Endothelial cell of umbilical vein (primary cell): ENCODE measurements at regions of chrX and their contacts with region 1.

Region 1: DNA sequence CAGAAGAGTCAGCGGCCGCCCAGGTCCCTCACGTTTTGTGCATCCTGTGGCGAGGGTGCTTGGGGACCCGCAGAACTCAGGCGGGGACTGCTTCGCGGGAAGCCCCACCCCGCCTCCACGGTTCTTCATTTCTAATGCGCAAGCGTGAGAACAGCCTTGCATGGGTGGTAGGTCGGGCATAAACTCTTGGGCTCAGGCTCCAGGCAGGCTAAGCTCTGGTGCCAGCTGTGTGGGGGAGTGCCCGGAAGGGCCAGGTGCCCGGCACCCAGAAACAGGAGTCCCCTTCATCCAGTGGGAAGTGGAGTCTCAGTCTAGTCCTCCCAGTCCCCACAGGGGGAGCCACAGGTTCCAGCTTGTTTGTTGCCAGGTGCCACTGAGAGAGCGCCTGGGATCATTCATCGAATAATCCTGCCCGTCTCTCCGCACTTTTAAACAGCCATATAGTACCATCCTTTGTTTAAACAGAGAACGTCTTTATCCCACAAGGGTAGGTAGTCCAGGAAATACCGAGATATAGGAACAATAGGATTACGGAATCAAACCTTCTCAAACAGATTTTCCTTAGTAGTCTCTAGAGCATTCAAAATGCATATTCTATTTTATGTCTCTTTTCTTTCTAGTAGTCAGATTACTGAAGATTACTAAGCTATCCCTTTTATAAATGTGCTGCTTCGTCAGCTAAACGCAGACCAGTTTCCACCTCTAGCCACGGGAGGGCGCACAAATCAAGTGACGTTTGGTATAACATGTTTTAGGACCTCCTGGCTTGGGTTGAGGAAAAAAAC is 12.7 kb upstream of the RBBP7 start:
- DNase-seq: peak; percentile 73
- H3K4me3 ChIP-seq: peak overlapping the region; percentile 40 to 73 (median 61)
- H3K27ac ChIP-seq: peak overlapping the region; percentile 55
- H3K4me1 ChIP-seq: peaks cover 11% of the 10 kb centered on the region
- H3K27me3 ChIP-seq: no peaks in the 10 kb centered on the region
- CTCF ChIP-seq: peak; percentile 51 to 59
- POLR2A ChIP-seq: no peak

Region 2: DNA sequence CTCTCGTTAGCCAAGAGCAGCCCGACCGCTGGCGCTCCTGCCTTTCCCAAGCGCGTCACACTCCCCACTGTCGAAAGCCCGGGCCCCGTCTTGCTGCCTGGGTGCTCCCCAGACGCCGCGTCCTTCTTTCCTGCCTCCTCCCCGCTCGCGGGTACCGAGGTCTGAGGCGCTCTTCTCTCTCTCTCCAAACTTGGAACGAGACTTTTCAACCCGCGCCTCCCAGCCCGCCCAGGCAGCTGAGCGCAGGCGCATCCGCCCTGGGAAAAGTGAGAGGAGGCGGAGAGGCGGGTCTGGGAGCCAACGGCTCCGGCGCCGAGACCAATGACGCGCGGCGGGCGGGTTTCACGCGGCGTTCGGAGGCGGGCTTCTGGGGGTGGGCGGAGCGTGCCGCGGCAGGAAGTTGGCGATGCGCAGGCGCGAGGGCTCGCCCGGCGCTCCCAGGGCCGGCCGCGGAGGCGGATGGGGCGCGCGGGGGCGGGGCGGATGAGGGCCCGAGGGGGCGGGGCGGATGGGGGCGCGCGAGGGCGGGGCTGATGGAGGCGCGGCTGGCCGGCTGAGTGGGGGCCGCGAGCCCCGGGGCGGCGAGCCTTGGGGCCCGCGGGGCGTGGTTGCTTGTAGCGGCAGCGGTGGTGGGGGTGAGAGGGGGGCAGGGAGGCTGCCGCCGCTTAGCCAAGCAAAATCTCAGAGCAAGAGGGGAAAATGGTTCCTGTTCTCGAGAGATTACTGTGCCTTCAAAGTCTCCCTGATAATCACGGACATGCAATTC is 12.6 kb before region 1 on chrX and contains the start of gene RBBP7:
- CTCF ChIA-PET with region 1: interaction called, 11 read pairs
- POLR2A ChIA-PET with region 1: interaction called, 3 read pairs
- dilution Hi-C with region 1: no loop called
- intact Hi-C with region 1: loop called (anchors 1 kb)
- DNase-seq: peak; percentile 89
- H3K4me3 ChIP-seq: peak within 1 kb of the TSS; percentile 69 to 89 (median 86)
- H3K27ac ChIP-seq: peak within 1 kb of the TSS; percentile 81
- H3K4me1 ChIP-seq: peaks cover 17% of the 10 kb centered on the region
- H3K27me3 ChIP-seq: no peaks in the 10 kb centered on the region
- CTCF ChIP-seq: no peak
- POLR2A ChIP-seq: no peak
- total RNA-seq, gene RBBP7: 129 and 130 TPM in 2 replicates

Region 3: DNA sequence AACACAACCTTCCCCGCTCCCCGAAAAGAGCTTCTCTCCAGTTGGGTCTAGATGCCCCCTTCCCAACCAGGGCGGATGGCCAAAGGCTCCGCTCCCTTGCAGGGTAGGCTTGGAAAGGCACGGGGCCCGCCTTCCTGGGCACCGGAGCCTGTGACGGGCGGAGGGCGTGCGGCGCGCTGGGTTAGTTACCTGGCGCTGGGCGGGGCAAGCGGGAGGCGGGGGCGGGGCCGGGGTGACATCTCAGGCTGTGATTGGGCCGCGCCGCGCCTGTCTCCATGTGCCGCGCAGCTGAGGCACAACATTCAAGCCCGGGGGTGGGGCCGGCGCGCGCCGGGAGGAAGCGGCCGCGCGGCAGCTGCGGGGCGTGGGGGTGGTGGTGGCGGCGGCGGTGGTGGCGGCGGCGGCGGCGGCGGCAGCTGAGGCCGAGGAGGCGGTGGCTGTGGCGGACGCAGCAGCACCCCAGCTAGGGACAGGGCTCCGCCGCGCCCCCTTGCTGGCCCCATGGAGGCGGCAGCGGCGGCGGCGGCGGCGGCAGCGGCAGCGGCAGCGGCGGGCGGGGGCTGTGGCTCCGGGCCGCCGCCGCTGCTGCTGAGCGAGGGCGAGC is 63.6 kb after region 1 on chrX and contains the start of gene REPS2:
- CTCF ChIA-PET with region 1: interaction called, 12 read pairs
- POLR2A ChIA-PET with region 1: no interaction called
- dilution Hi-C with region 1: no loop called
- intact Hi-C with region 1: loop called (anchors 2 kb)
- DNase-seq: peak; percentile 56
- H3K4me3 ChIP-seq: peak within 1 kb of the TSS; percentile 41 to 65 (median 56)
- H3K27ac ChIP-seq: no peak within 1 kb of the TSS
- H3K4me1 ChIP-seq: peaks cover 3% of the 10 kb centered on the region
- H3K27me3 ChIP-seq: peaks cover 0 to 3% of the 10 kb centered on the region in 2 experiments
- CTCF ChIP-seq: no peak
- POLR2A ChIP-seq: no peak
- total RNA-seq, gene REPS2: 2.6 and 4.9 TPM in 2 replicates

Region 4: DNA sequence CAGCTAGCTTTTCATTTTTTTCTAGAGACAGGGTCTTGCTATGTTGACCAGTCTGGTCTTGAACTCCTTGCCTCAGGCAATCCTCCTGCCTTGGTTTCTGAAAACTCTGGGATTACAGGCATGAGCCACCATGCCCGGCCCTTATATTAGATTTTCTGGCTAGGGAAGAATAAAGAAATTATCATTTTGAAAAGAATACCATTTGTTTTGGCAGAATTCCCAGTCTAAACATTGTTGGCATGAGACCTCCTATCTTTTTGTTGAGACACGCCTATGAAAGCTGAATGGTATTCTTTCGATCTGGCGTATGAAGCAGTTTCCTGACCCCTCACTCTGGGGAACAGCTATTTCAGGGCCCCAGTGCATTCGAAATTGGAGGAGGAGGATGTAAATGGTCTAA is 170.6 kb after region 1 on chrX:
- CTCF ChIA-PET with region 1: interaction called, 280 read pairs
- POLR2A ChIA-PET with region 1: no interaction called
- dilution Hi-C with region 1: no loop called
- intact Hi-C with region 1: no loop called
- DNase-seq: peak; percentile 12
- H3K4me3 ChIP-seq: no peak overlapping the region
- H3K27ac ChIP-seq: no peak overlapping the region
- H3K4me1 ChIP-seq: peaks cover 4% of the 10 kb centered on the region
- H3K27me3 ChIP-seq: no peaks in the 10 kb centered on the region
- CTCF ChIP-seq: no peak
- POLR2A ChIP-seq: no peak

Region 5: DNA sequence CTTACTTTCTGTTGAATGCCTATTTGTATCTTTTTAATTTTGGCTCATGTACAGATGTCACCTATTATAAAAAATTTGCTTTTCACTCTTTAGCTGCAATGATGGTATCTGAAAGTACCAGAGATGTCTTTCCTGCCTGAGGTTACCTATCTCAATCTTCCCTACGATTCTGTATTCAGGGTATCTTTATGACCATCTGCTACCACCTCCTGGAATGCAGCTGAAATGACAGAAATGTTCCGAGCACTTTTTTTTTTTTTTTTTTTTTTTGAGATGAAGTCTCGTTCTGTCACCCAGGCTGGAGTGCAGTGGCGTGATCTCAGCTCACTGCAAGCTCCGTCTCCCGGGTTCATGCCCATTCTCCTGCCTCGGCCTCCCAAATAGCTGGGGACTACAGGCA is 199.9 kb after region 1 on chrX:
- CTCF ChIA-PET with region 1: interaction called, 39 read pairs
- POLR2A ChIA-PET with region 1: no interaction called
- dilution Hi-C with region 1: no loop called
- intact Hi-C with region 1: loop called (anchors 2 kb)
- DNase-seq: peak; percentile 3
- H3K4me3 ChIP-seq: no peak overlapping the region
- H3K27ac ChIP-seq: no peak overlapping the region
- H3K4me1 ChIP-seq: peaks cover 8% of the 10 kb centered on the region
- H3K27me3 ChIP-seq: no peaks in the 10 kb centered on the region
- CTCF ChIP-seq: no peak
- POLR2A ChIP-seq: no peak

Region 6: DNA sequence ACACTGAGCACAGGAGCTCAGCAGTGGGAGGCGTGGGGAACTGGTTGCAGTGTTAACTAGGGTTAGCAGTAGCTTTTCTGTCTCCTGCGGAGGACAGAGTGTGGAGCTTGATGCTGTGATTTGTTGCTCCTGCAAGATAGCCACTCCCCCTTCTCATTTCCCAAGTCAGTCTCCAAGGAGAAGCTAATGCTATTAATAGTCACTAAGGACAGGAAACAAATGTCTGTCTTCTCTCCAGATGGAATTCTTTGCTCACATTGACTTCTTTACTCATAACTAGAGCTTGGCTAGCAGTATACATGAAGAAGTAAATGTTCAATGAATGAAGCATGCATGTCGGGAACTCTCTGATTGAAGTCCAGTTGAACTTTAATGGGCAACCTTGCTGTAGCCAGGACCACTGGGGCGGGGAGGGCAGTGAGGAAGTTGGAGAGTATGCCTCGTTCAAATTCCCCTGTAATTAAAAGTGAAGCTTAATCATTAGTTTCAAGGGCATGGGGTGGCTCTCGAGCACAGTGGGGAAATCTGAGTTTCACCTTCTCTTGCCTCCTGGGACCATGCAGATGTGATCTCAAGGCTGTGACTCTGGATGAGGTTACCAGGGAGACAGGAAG is 697.8 kb after region 1 on chrX:
- CTCF ChIA-PET with region 1: no interaction called
- POLR2A ChIA-PET with region 1: no interaction called
- dilution Hi-C with region 1: no loop called
- intact Hi-C with region 1: no loop called
- DNase-seq: peak; percentile 39
- H3K4me3 ChIP-seq: no peak overlapping the region
- H3K27ac ChIP-seq: no peak overlapping the region
- H3K4me1 ChIP-seq: peaks cover 7% of the 10 kb centered on the region
- H3K27me3 ChIP-seq: peaks cover 10 to 18% of the 10 kb centered on the region in 2 experiments
- CTCF ChIP-seq: no peak
- POLR2A ChIP-seq: no peak